Esophagus muscularis mucosa (tissue), 4 donors: ENCODE measurements at regions of chr21 and their contacts with region 1.

Region 1: GRCh38 chr21:38903690-38904139 is 98.0 kb downstream of the ETS2 start:
- DNase-seq: no peak
- H3K4me3 ChIP-seq: no peak overlapping the region
- H3K27ac ChIP-seq: peak overlapping the region; percentile 39 to 83 (median 72)
- H3K4me1 ChIP-seq: peaks cover 21 to 32% (median 27%) of the 10 kb centered on the region in 4 donors
- H3K27me3 ChIP-seq: no peaks in the 10 kb centered on the region
- CTCF ChIP-seq: no peak
- EP300 ChIP-seq: peak; percentile 5
- POLR2A ChIP-seq: no peak

Region 2: GRCh38 chr21:38679531-38679930 is 224.2 kb before region 1 on chr21:
- intact Hi-C with region 1: no loop called
- DNase-seq: no peak
- H3K4me3 ChIP-seq: no peak overlapping the region
- H3K27ac ChIP-seq: no peak overlapping the region
- H3K4me1 ChIP-seq: peaks cover 0 to 10% (median 4%) of the 10 kb centered on the region in 4 donors
- H3K27me3 ChIP-seq: peaks cover 0 to 47% (median 2%) of the 10 kb centered on the region in 4 donors
- CTCF ChIP-seq: no peak
- EP300 ChIP-seq: no peak
- POLR2A ChIP-seq: no peak

Region 3: DNA sequence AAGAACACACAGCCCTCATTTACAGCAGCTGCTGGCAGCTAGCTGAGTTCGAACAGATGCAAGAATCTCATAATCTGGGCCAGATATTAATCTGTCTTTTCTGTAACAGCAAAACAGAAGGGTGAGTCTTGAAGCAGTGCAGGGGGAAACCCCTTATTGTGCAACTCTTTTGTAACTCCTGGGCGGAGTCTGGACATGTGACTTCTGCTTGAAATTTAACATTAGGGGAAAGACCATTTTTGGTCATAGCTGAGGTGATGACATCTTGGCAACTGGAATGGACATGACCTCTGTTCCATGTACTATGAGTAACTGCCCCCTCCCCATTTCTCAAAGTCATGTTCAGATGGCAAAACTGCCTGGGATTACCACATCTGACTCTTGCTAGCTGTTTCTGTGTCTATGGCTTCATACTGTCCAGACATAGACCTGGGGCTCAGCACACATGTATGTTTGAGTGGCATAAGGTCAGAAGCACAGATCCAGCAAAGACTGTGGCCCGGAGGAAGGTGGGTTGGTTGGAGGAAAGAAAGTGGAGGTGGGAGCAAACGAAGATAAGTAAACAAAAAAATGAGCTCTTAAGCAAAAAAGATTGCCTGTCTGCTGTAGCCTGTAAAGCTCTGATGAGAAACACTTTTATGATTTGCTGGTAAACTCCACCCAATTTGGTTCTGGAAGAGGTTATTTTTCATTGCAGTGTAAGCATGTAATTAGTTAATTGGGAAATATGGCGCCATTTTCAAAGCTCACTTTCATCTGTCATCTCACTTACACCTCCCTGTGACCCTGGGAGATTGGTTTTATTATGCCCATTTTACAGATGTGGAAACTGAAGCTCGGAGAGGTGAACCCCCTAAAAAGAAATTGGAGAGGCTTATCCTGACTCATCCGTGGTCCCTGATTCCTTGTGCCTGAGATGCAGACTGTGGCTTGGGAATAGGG is 71.9 kb before region 1 on chr21:
- intact Hi-C with region 1: loop called (anchors 10 kb)
- DNase-seq: peak; percentile 97
- H3K4me3 ChIP-seq: no peak overlapping the region
- H3K27ac ChIP-seq: peak overlapping the region; percentile 33 to 73 (median 56)
- H3K4me1 ChIP-seq: peaks cover 13 to 20% (median 15%) of the 10 kb centered on the region in 4 donors
- H3K27me3 ChIP-seq: no peaks in the 10 kb centered on the region
- CTCF ChIP-seq: no peak
- EP300 ChIP-seq: peak; percentile 25
- POLR2A ChIP-seq: no peak

Region 4: DNA sequence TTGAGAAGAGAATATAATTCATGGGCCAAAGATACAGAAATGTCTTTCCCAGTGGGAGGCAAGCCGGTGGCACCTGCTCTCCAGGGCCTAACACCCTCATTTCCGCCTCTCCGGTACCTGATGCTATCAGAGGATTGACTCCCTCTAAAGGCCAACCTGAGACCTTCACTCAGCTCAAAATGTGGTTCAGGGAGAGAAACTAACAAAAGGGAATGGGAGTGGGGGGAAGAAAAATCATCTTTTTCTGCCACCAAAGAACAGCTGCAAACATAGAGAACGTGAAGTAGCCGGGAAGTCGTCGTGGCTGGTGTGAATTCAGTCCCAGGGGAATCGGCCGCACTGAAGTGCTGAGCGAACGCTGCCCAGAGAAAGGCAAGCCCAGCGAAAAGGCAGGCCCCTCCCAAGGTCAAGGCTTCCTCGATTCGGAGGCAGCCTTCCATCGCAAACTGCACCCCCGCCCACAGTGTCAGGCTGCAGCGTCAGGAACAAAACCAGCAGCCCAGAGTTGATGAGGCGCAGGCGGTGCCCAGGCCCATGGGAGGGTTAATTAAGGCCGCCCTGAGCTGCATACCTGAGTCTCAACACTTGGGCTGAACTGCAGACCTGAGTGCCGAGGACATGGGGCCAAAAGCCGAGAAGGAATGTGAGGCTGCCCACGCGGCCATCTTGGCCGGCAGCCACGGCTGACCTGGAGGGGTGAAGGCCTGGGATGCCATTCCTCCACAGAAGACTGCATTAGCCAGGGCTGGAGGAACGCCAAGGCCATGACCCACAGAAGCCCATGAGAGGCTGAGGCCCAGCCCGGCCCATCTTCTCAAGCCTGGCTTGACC is 119.4 kb after region 1 on chr21:
- intact Hi-C with region 1: no loop called
- DNase-seq: no peak
- H3K4me3 ChIP-seq: no peak overlapping the region
- H3K27ac ChIP-seq: peak overlapping the region; percentile 68 to 76 (median 70)
- H3K4me1 ChIP-seq: peaks cover 35 to 36% (median 35%) of the 10 kb centered on the region in 4 donors
- H3K27me3 ChIP-seq: no peaks in the 10 kb centered on the region
- CTCF ChIP-seq: peak in 1 of 3 experiments; percentile 18
- EP300 ChIP-seq: no peak
- POLR2A ChIP-seq: no peak

Region 5: GRCh38 chr21:39033878-39034602 is 130.3 kb after region 1 on chr21:
- intact Hi-C with region 1: no loop called
- DNase-seq: no peak
- H3K4me3 ChIP-seq: no peak overlapping the region
- H3K27ac ChIP-seq: no peak overlapping the region
- H3K4me1 ChIP-seq: peaks cover 0 to 12% (median 0%) of the 10 kb centered on the region in 4 donors
- H3K27me3 ChIP-seq: no peaks in the 10 kb centered on the region
- CTCF ChIP-seq: no peak
- EP300 ChIP-seq: no peak
- POLR2A ChIP-seq: no peak

Region 6: DNA sequence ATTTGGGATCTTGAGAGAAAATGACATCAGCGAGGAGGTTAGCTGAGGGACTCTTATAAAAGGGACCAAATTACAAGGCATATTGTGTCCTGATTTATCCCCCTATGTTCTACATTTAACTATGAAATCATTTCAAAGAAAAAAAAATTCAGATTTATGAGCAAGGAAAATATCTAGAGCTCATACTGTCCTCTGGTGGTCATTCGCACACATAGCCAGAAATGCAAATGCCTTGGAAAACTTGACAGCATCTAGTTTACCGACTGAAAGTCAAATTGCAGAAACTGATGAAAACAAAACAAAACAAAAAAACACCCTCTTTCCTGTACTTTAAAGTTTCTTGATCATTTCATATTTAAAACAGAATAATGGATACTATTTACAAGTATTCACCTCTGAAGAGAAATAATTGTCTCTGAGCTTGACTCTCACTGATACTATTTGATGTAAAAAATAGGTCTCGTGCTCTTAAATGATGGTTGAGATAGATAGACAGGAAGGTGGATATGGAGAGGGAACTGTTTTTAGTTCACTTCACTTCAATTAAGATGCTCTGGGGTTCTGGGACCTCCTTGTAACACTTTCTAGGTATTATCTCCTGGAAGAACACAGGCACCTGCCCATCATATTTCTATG is 1217.3 kb after region 1 on chr21:
- intact Hi-C with region 1: no loop called
- DNase-seq: no peak
- H3K4me3 ChIP-seq: no peak overlapping the region
- H3K27ac ChIP-seq: no peak overlapping the region
- H3K4me1 ChIP-seq: peaks cover 0 to 7% (median 3%) of the 10 kb centered on the region in 4 donors
- H3K27me3 ChIP-seq: no peaks in the 10 kb centered on the region
- CTCF ChIP-seq: peak; percentile 90 to 92 (median 91)
- EP300 ChIP-seq: no peak
- POLR2A ChIP-seq: no peak